PC-3 (cell line): ENCODE measurements at regions of chr7 and their contacts with region 1.

Region 1: GRCh38 chr7:105906695-105907094 is 30.3 kb upstream of the ATXN7L1 start:
- DNase-seq: no peak
- ATAC-seq: peak; percentile 37; the same call in 1 of the 2 replicates
- H3K4me3 ChIP-seq: no peak overlapping the region
- H3K27ac ChIP-seq: no peak overlapping the region
- H3K4me1 ChIP-seq: no peaks in the 10 kb centered on the region
- H3K27me3 ChIP-seq: no peaks in the 10 kb centered on the region
- CTCF ChIP-seq: no peak

Region 2: DNA sequence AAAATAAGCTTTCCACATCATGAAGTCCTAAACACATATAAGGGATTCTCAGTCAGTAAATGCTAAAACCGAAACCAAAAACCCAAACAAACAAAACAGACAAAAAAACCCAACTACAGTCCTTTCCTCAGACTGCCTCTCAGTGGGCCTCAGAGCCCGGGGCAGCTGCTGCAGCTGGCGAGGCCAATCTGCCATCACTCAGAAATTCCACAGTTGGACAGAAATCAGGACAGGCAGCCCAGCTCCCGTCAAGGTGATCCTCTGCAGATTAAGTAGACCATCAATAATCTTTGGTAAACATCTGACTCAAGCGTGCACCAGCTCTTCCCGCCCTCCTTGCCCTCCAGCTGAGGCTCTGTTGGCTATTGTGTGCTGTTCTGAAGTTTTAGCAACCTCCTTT is 172.5 kb before region 1 on chr7:
- CTCF ChIA-PET with region 1: no interaction called
- POLR2A ChIA-PET with region 1: no interaction called
- intact Hi-C with region 1: no loop called
- DNase-seq: peak; percentile 89
- ATAC-seq: peak; percentile 99
- H3K4me3 ChIP-seq: no peak overlapping the region
- H3K27ac ChIP-seq: no peak overlapping the region
- H3K4me1 ChIP-seq: peaks cover 13% of the 10 kb centered on the region
- H3K27me3 ChIP-seq: no peaks in the 10 kb centered on the region
- CTCF ChIP-seq: no peak

Region 3: GRCh38 chr7:105885387-105886111 is 21.1 kb before region 1 on chr7:
- CTCF ChIA-PET with region 1: no interaction called
- POLR2A ChIA-PET with region 1: interaction called, 33 read pairs
- intact Hi-C with region 1: no loop called
- DNase-seq: no peak
- ATAC-seq: no peak
- H3K4me3 ChIP-seq: no peak overlapping the region
- H3K27ac ChIP-seq: no peak overlapping the region
- H3K4me1 ChIP-seq: no peaks in the 10 kb centered on the region
- H3K27me3 ChIP-seq: no peaks in the 10 kb centered on the region
- CTCF ChIP-seq: no peak

Region 4: GRCh38 chr7:105896407-105896911 is 10.2 kb before region 1 on chr7:
- CTCF ChIA-PET with region 1: no interaction called
- POLR2A ChIA-PET with region 1: interaction called, 10 read pairs
- intact Hi-C with region 1: no loop called
- DNase-seq: peak; percentile 38
- ATAC-seq: peak; percentile 98
- H3K4me3 ChIP-seq: no peak overlapping the region
- H3K27ac ChIP-seq: no peak overlapping the region
- H3K4me1 ChIP-seq: 0 out of 2 replicates have a peak, but pooled peaks cover 4% of the 10 kb centered on the region
- H3K27me3 ChIP-seq: no peaks in the 10 kb centered on the region
- CTCF ChIP-seq: no peak